Upper lobe of right lung (tissue), 1 donor: ENCODE measurements at regions of chr2 and their contacts with region 1.

Region 1: DNA sequence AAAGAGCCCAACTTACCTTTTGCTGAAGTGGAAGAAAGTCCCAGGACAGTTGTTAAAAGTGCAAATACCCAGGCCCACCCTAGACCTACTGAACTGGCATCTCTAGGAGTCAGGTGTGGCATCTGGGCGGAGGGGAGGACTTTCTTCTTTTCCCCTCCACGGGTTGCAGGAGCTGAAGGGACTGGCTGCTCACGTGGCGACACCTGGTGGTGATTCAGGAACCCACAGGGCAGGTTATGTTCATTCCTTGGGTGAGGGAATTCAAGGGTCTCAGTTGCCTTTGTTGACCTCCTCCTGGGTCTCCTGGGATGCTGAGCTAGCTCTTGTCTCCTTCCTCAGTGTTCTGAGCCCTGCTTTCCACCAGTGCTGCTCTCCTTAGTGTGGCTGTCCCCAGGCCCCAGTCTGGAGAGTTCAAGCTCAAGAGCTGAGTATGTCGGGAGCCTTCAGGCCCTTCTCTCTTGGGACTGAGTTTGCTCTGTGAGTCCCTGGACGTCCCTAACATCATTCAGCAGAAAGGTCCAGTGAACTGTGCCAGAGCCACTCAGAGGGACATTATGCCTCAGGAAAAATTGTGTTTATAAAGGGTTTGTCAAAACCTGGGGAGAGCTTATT is 56.9 kb downstream of the DYSF start:
- DNase-seq: peak; percentile 82
- ATAC-seq: peak; percentile 78
- H3K4me3 ChIP-seq: no peak overlapping the region
- H3K27ac ChIP-seq: no peak overlapping the region
- H3K4me1 ChIP-seq: peaks cover 3% of the 10 kb centered on the region
- H3K27me3 ChIP-seq: no peaks in the 10 kb centered on the region
- CTCF ChIP-seq: peak; percentile 90

Region 2: GRCh38 chr2:71303849-71304248 is 206.5 kb before region 1 on chr2:
- intact Hi-C with region 1: loop called (anchors 5 kb)
- DNase-seq: no peak
- ATAC-seq: no peak
- H3K4me3 ChIP-seq: no peak overlapping the region
- H3K27ac ChIP-seq: no peak overlapping the region
- H3K4me1 ChIP-seq: no peaks in the 10 kb centered on the region
- H3K27me3 ChIP-seq: no peaks in the 10 kb centered on the region
- CTCF ChIP-seq: no peak